ENCODE measurements at regions of chr16 and their contacts with region 1.

Region 1: DNA sequence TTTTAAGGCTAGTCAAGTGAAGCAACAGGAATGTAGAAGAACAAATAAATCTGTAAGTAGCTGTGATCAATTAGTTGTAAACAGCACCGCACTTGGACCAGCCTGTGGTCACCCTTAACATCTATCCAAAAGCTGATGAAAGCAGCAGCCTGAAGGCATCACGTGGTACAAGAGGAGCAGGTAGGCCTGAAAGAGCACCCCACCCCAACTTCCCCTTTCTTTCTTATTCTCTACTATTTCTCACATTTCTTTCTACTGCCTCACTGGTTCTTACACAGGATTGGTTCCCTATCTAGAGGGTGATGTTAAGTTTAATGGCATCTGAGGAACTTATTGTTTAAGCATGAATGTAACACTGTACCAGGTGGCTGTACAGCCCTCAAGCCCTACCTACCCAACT is 42.6 kb upstream of the CLEC18B start:
- DNase-seq: no peak
- H3K4me3 ChIP-seq: no peak overlapping the region
- H3K27ac ChIP-seq: no peak overlapping the region
- H3K4me1 ChIP-seq: no peaks in the 10 kb centered on the region
- H3K27me3 ChIP-seq: no peaks in the 10 kb centered on the region
- CTCF ChIP-seq: no peak
- POLR2A ChIP-seq: no peak

Region 2: GRCh38 chr16:74026373-74027281 is 437.3 kb before region 1 on chr16:
- intact Hi-C with region 1: no loop called
- DNase-seq: no peak
- H3K4me3 ChIP-seq: no peak overlapping the region
- H3K27ac ChIP-seq: no peak overlapping the region
- H3K4me1 ChIP-seq: no peaks in the 10 kb centered on the region
- H3K27me3 ChIP-seq: peaks cover 0 to 4% of the 10 kb centered on the region in 2 donors
- CTCF ChIP-seq: no peak
- POLR2A ChIP-seq: no peak

Region 3: DNA sequence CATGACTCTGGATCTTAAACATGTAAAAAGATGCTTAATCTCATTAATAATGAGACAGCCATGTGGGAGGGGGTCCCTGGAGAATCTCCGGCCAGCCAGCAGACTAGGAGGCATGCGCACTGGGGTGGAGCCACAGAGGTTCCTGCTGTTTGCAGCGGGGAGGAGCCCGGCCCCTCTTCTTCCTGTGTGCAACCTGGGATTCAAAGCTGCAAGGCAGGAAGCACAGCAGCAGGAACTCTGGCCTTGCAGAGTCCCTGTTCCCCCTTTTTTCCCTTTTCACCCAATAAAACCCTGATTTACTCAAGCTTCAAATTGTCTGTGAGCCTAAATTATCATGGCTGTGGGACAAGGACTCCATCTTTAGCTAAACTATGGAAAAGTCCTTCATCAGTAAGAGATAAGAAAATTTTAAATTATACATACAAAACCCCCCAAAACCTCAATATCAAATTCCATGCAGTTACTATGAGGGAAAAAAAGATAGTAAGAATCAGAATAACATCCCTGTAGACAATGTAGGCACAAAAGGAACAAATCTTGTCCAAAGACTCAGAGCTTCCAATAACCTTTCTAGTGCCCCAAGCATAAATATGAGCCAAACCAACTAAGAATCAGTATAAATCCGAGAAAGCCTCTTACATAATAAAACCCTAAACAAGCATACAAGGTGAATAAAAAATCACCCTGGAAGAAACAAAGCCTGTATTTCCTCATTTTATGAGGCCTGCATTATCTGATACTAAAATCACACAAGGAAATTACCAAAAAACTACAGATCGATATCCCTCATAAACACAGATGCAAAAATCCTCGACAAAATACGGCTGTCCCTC is 957.3 kb after region 1 on chr16:
- intact Hi-C with region 1: loop called (anchors 5 kb)
- DNase-seq: peak in 1 of 2 donors; percentile 39
- H3K4me3 ChIP-seq: peak overlapping the region in 1 of 3 donors; percentile 38
- H3K27ac ChIP-seq: peak overlapping the region in 1 of 2 donors; percentile 41
- H3K4me1 ChIP-seq: no peaks in the 10 kb centered on the region
- H3K27me3 ChIP-seq: no peaks in the 10 kb centered on the region
- CTCF ChIP-seq: no peak
- POLR2A ChIP-seq: no peak